H1 (cell line): ENCODE measurements at regions of chr2 and their contacts with region 1.

Region 1: GRCh38 chr2:70124983-70125480 is 37.8 kb downstream of the PCBP1 start:
- DNase-seq: peak in 1 of 2 experiments; percentile 75
- H3K4me3 ChIP-seq: peak overlapping the region; percentile 52 to 89 (median 74)
- H3K27ac ChIP-seq: peak overlapping the region; percentile 97
- H3K4me1 ChIP-seq: peaks cover 7 to 18% (median 10%) of the 10 kb centered on the region in 4 experiments
- H3K27me3 ChIP-seq: no peaks in the 10 kb centered on the region; a peak in 1 of 7 replicates
- CTCF ChIP-seq: no peak
- EP300 ChIP-seq: no peak
- POLR2A ChIP-seq: peak; percentile 50 to 97
- RAD21 ChIP-seq: no peak

Region 2: DNA sequence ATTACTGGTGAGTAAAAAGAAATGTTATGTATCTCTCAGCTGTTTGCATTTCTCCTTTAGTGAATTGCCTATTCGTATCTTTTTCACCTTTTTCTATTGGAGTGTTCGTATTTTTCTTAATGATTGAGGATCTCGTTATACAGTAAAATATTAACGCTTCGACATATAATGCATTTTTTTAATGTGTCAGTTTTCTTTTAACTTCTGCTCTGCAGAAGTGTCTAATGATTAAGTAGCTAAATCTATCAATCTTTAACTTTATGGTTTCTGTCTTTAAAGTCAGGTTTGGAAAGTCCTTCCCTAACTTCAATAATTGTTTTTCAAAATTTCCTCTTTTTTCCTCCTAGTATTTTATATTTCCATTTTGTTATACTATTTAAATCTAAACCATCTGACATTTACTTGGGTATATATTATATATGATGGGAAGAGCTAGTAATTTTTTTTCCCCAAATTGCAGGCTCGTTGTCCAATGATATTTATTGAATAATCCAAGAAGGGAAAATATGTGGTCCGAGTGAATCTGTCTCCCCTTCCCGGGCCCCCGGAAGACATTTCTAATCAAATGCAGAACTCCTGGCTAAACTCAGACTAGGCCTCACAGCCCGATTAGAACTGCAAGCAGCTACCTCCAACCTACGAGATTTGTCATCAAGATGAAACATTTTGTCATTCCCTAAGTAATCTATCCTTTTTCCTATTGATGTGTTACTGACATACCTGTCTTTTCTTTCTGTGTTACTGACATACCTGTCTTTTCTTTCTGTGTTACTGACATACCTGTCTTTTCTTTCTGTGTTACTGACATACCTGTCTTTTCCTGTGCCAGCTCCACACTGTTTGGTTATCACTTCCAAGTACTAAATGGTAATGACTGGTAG is 20.6 kb before region 1 on chr2:
- CTCF ChIA-PET with region 1: interaction called, 3 read pairs
- POLR2A ChIA-PET with region 1: interaction called, 1,553 read pairs
- DNase-seq: no peak
- H3K4me3 ChIP-seq: no peak overlapping the region
- H3K27ac ChIP-seq: no peak overlapping the region
- H3K4me1 ChIP-seq: peaks cover 7 to 16% (median 11%) of the 10 kb centered on the region in 4 experiments
- H3K27me3 ChIP-seq: no peaks in the 10 kb centered on the region
- CTCF ChIP-seq: no peak
- EP300 ChIP-seq: no peak
- POLR2A ChIP-seq: no peak
- RAD21 ChIP-seq: no peak